Activated CD4-positive, alpha-beta memory T cell treated with anti-CD3 and anti-CD28 coated beads for 36 hours (primary cell): ENCODE measurements at regions of chr18 and their contacts with region 1.

Region 1: GRCh38 chr18:47901624-47902362 is 28.7 kb downstream of the SMAD2 start:
- DNase-seq: no peak
- H3K4me3 Mint-ChIP-seq: peak overlapping the region; percentile 9
- H3K27ac Mint-ChIP-seq: peak overlapping the region; percentile 87
- H3K4me1 Mint-ChIP-seq: peaks cover 95% of the 10 kb centered on the region
- H3K27me3 Mint-ChIP-seq: no peaks in the 10 kb centered on the region

Region 2: GRCh38 chr18:47917923-47918610 is 16.3 kb after region 1 on chr18:
- CTCF ChIA-PET with region 1: interaction called, 8 read pairs
- POLR2A ChIA-PET with region 1: interaction called, 12 read pairs
- intact Hi-C with region 1: loop called (anchors 1 kb)
- DNase-seq: peak; percentile 24
- H3K4me3 Mint-ChIP-seq: peak overlapping the region; percentile 58
- H3K27ac Mint-ChIP-seq: peak overlapping the region; percentile 91
- H3K4me1 Mint-ChIP-seq: peaks cover 95% of the 10 kb centered on the region
- H3K27me3 Mint-ChIP-seq: no peaks in the 10 kb centered on the region

Region 3: DNA sequence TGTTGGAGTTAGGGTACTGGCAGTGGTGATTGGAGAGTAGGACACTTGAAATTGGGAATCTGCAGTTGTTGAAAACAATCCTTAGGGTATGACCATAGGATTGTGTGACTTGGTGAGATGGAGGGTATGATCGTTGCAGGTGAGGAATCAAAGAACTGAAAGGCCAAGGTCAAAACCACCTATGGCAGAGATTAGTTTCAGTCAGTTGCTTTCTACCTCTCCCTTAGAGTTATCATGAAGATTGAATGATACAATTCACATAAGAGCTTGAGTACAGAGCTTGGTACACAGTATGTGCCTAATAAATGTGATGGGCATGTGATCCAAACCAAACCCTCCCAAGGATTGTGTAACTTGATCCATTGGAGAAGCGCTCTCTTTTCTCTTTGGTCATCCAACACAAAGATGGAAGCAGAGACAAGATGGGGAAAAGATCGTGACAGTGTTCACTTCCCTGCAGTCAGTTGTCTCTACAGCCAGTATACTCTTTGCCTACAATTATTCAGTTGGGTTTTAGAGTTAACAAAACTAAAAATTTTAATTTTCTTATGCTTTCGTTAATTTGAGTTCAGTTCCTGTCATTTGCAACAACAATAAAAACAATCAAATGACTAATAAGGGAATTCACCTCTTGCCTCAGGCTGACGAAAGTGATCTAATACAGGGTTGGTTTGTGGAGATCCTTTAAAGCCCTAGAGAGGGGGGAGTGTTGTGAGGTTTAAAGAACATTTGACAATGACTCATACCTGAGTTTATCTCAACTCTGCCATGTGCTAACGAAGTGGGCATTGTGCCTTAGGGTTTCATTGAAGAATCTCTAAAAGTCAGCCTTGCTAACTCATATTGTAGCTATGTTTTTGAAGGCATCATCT is 43.4 kb after region 1 on chr18:
- CTCF ChIA-PET with region 1: no interaction called
- POLR2A ChIA-PET with region 1: no interaction called
- intact Hi-C with region 1: no loop called
- DNase-seq: no peak
- H3K4me3 Mint-ChIP-seq: no peak overlapping the region
- H3K27ac Mint-ChIP-seq: no peak overlapping the region
- H3K4me1 Mint-ChIP-seq: peaks cover 13% of the 10 kb centered on the region
- H3K27me3 Mint-ChIP-seq: peaks cover 14% of the 10 kb centered on the region